Activated T-helper 2 cell treated with anti-CD3 and anti-CD28 coated beads, Interferon-gamma antibody, Interleukin-2, Interleukin-4, amounts not matched to agents 10 μg/mL and 5 μg/mL and 100 μg/mL, durations not matched to agents 14 hours and 24 hours and 36 hours (primary cell): ENCODE measurements at regions of chr2 and their contacts with region 1.

Region 1: DNA sequence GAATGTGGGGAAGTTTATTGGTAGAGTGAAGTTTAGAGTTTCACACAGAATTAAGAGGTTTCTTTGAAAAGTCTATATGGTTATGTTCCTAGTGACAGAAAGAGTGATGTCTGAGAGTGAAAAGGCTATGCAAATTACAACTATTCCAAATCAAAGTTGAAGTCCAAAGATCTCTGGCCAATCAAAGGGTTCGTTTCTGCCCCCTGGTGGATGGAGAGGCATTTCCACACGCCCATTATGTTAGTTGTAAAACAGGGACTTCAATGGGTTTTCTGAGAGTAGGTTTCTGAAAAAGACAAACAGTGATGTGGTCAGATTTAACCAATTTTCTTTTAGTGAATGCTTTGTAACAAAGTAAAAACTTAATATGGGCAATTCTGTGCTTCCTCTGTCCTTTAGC is 441.5 kb upstream of the POU3F3 start:
- DNase-seq: no peak
- H3K4me3 Mint-ChIP-seq: no peak overlapping the region
- H3K27ac Mint-ChIP-seq: no peak overlapping the region
- H3K4me1 Mint-ChIP-seq: no peaks in the 10 kb centered on the region
- H3K27me3 Mint-ChIP-seq: no peaks in the 10 kb centered on the region

Region 2: DNA sequence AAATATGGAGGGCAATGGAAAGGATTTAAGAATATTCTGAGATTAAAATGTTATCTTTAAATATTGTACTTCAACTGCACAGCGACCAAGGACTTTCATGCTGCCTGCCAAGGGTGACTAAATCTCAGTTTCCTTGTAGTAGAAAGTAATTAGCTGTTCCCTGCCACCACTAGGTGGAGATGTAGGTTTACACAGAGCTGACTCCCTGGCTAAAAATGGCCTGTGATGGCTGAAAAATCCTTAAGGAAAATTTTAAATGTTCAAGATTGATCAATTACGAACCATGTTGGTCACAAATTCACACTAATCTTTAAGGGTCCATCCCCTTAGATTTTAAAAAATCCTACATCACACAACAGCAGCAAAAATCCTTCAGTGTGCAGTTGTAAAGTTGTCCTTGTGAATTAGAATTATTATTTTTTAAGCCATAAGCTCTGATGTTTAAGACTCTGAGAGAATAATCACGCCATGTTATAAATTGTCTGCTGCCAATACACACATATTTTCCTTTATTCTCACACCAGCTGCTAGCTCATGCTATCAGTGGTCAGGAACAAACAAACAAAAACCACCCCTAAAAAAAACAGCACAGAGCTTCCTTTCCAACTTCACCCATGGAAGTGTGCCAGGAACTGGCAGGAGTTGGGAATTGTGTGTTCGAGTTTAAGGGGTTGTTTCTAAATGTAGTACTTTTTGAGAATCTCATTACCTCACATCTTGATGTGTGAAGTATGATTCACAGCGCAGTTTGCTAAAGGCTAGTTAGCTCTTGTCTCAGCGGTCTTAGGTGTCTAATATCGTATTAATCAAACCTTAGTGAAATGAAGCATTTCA is 1250.7 kb before region 1 on chr2:
- intact Hi-C with region 1: loop called (anchors 5 kb)
- DNase-seq: no peak
- H3K4me3 Mint-ChIP-seq: no peak overlapping the region
- H3K27ac Mint-ChIP-seq: no peak overlapping the region
- H3K4me1 Mint-ChIP-seq: no peaks in the 10 kb centered on the region
- H3K27me3 Mint-ChIP-seq: no peaks in the 10 kb centered on the region